ENCODE measurements at regions of chr9 and their contacts with region 1.

Region 1: GRCh38 chr9:33143241-33143661 is 23.9 kb downstream of the B4GALT1 start:
- DNase-seq: peak in 1 of 2 donors; percentile 53
- ATAC-seq: peak; percentile 41 to 68 (median 52)
- H3K4me3 ChIP-seq: no peak overlapping the region
- H3K4me3 Mint-ChIP-seq: peak overlapping the region; percentile 79
- H3K27ac ChIP-seq: peak overlapping the region; percentile 87
- H3K27ac Mint-ChIP-seq: peak overlapping the region; percentile 89 to 98
- H3K4me1 ChIP-seq: peaks cover 96% of the 10 kb centered on the region
- H3K4me1 Mint-ChIP-seq: peaks cover 88 to 97% of the 10 kb centered on the region in 2 donors
- H3K27me3 ChIP-seq: no peaks in the 10 kb centered on the region
- H3K27me3 Mint-ChIP-seq: no peaks in the 10 kb centered on the region
- CTCF ChIP-seq: no peak

Region 2: DNA sequence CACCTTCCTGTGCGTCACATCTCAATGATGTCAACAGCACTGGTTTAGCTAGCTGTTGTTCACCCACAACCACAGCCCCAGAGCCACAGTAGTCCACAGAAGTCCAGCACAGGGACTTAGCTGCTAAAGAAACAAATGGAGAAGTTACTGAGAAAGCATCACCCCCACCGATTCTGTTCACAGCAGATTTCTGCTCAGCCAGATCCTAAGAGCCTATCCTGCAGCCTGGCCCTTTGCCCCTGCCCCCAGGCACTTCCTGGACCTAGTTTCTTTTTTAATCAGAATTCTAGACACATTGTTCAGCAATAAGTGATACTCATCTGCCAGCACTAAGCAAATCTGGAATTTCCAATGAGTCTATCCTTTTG is 16.5 kb after region 1 on chr9:
- intact Hi-C with region 1: loop called (anchors 2 kb)
- DNase-seq: peak; percentile 62 to 86
- ATAC-seq: peak; percentile 43 to 70 (median 61)
- H3K4me3 ChIP-seq: no peak overlapping the region
- H3K4me3 Mint-ChIP-seq: peak overlapping the region; percentile 91
- H3K27ac ChIP-seq: peak overlapping the region; percentile 94
- H3K27ac Mint-ChIP-seq: peak overlapping the region; percentile 99
- H3K4me1 ChIP-seq: peaks cover 90% of the 10 kb centered on the region
- H3K4me1 Mint-ChIP-seq: peaks cover 96% of the 10 kb centered on the region in 2 donors
- H3K27me3 ChIP-seq: no peaks in the 10 kb centered on the region
- H3K27me3 Mint-ChIP-seq: no peaks in the 10 kb centered on the region
- CTCF ChIP-seq: no peak

Region 3: GRCh38 chr9:33202552-33203201 is 59.4 kb after region 1 on chr9:
- intact Hi-C with region 1: no loop called
- DNase-seq: peak; percentile 42 to 66
- ATAC-seq: peak; percentile 86 to 99 (median 95)
- H3K4me3 ChIP-seq: no peak overlapping the region
- H3K4me3 Mint-ChIP-seq: peak overlapping the region; percentile 22
- H3K27ac ChIP-seq: peak overlapping the region; percentile 17
- H3K27ac Mint-ChIP-seq: peak overlapping the region; percentile 8 to 87
- H3K4me1 ChIP-seq: peaks cover 15% of the 10 kb centered on the region
- H3K4me1 Mint-ChIP-seq: peaks cover 16 to 23% of the 10 kb centered on the region in 2 donors
- H3K27me3 ChIP-seq: no peaks in the 10 kb centered on the region
- H3K27me3 Mint-ChIP-seq: no peaks in the 10 kb centered on the region
- CTCF ChIP-seq: no peak

Measured in natural killer cell (primary cell).